ENCODE measurements at regions of chr15 and their contacts with region 1.

Region 1: GRCh38 chr15:73697033-73697467 is 12.9 kb downstream of the CD276 start:
- DNase-seq: peak; percentile 84
- H3K4me3 Mint-ChIP-seq: peak overlapping the region; percentile 45
- H3K27ac Mint-ChIP-seq: peak overlapping the region; percentile 64
- H3K4me1 Mint-ChIP-seq: peaks cover 45% of the 10 kb centered on the region
- H3K27me3 Mint-ChIP-seq: peaks cover 56% of the 10 kb centered on the region

Region 2: GRCh38 chr15:73284090-73284716 is 412.8 kb before region 1 on chr15:
- intact Hi-C with region 1: loop called (anchors 10 kb)
- DNase-seq: no peak
- H3K4me3 Mint-ChIP-seq: no peak overlapping the region
- H3K27ac Mint-ChIP-seq: no peak overlapping the region
- H3K4me1 Mint-ChIP-seq: peaks cover 4% of the 10 kb centered on the region
- H3K27me3 Mint-ChIP-seq: peaks cover 3% of the 10 kb centered on the region

Region 3: DNA sequence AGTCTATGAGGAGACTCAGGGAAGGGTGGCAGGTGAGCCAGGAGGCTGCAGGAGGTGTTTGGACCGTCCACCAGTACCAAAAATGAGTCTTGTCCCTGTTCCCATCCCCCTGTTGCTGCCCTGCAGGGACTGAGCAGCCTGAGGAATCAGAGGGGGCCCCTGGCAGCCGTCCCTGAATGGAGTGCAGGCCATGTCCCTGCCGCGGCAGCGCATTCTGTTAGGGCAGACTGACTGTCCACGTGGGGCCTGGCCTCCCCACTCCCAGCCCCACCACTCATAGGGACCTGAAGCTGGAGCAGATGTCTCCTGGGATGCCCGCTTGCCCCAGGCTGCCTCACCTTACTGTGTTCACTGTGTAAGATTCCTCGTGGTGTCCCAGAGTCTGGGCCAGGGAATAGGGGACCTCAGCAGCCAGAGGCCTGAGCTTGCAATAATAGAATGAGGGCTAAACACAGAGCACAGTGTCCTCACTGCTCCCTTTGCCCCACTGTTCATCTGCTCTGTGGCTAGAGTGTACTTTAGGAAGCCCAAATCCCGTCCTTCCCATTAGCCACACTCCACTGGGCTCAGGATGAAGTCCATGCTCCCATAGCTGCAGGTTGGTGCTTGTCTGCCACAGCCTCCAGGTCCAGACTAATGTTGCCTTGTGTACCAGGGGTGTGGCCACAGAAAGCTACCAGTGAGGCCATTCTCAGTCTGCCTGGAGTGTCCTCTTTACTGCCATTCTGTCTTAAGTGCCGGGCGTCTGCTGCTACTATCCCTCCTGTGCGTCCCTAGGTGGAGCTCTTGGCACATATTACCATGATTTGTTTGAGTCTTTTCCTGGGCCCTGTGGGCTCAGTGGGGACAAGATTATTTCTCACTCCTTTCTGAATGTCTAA is 391.5 kb before region 1 on chr15:
- intact Hi-C with region 1: loop called (anchors 2 kb)
- DNase-seq: no peak
- H3K4me3 Mint-ChIP-seq: no peak overlapping the region
- H3K27ac Mint-ChIP-seq: no peak overlapping the region
- H3K4me1 Mint-ChIP-seq: peaks cover 14% of the 10 kb centered on the region
- H3K27me3 Mint-ChIP-seq: peaks cover 3% of the 10 kb centered on the region

Region 4: GRCh38 chr15:73560501-73561117 is 136.4 kb before region 1 on chr15:
- intact Hi-C with region 1: loop called (anchors 1 kb)
- DNase-seq: no peak
- H3K4me3 Mint-ChIP-seq: no peak overlapping the region
- H3K27ac Mint-ChIP-seq: no peak overlapping the region
- H3K4me1 Mint-ChIP-seq: peaks cover 9% of the 10 kb centered on the region
- H3K27me3 Mint-ChIP-seq: no peaks in the 10 kb centered on the region

Region 5: GRCh38 chr15:73677146-73677607 is 19.9 kb before region 1 on chr15:
- intact Hi-C with region 1: loop called (anchors 1 kb)
- DNase-seq: peak; percentile 31
- H3K4me3 Mint-ChIP-seq: no peak overlapping the region
- H3K27ac Mint-ChIP-seq: no peak overlapping the region
- H3K4me1 Mint-ChIP-seq: peaks cover 33% of the 10 kb centered on the region
- H3K27me3 Mint-ChIP-seq: peaks cover 21% of the 10 kb centered on the region

Region 6: GRCh38 chr15:73683777-73684580 is 13.1 kb before region 1 on chr15 and contains the start of gene CD276:
- intact Hi-C with region 1: loop called (anchors 1 kb)
- DNase-seq: no peak
- H3K4me3 Mint-ChIP-seq: peak within 1 kb of the TSS; percentile 92
- H3K27ac Mint-ChIP-seq: peak within 1 kb of the TSS; percentile 83
- H3K4me1 Mint-ChIP-seq: peaks cover 44% of the 10 kb centered on the region
- H3K27me3 Mint-ChIP-seq: peaks cover 59% of the 10 kb centered on the region
- total RNA-seq, gene CD276: 29.0 and 29.2 TPM in 2 replicates

Measured in activated T-helper 1 cell treated with anti-CD3 and anti-CD28 coated beads, Interleukin-12 subunit alpha, Interleukin-12 subunit beta, Interleukin-2, Interleukin-4 antibody, amounts not matched to agents 30 ng/mL and 10 ng/mL and 1 ng/mL, durations not matched to agents 14 hours and 24 hours and 36 hours (primary cell).